ENCODE measurements at regions of chr9 and their contacts with region 1.

Region 1: GRCh38 chr9:87223392-87224246 is 274.0 kb upstream of the DAPK1 start:
- DNase-seq: no peak
- ATAC-seq: no peak
- H3K4me3 Mint-ChIP-seq: no peak overlapping the region
- H3K27ac Mint-ChIP-seq: no peak overlapping the region
- H3K4me1 Mint-ChIP-seq: no peaks in the 10 kb centered on the region
- H3K27me3 Mint-ChIP-seq: peaks cover 5% of the 10 kb centered on the region

Region 2: GRCh38 chr9:86794391-86795046 is 429.1 kb before region 1 on chr9:
- CTCF ChIA-PET with region 1: no interaction called
- POLR2A ChIA-PET with region 1: no interaction called
- intact Hi-C with region 1: no loop called
- DNase-seq: no peak
- ATAC-seq: no peak
- H3K4me3 Mint-ChIP-seq: no peak overlapping the region
- H3K27ac Mint-ChIP-seq: no peak overlapping the region
- H3K4me1 Mint-ChIP-seq: no peaks in the 10 kb centered on the region
- H3K27me3 Mint-ChIP-seq: peaks cover 2% of the 10 kb centered on the region

Region 3: GRCh38 chr9:87160148-87161102 is 63.2 kb before region 1 on chr9:
- CTCF ChIA-PET with region 1: no interaction called
- POLR2A ChIA-PET with region 1: no interaction called
- intact Hi-C with region 1: loop called in 1 of 2 experiments (anchors 10 kb)
- DNase-seq: no peak
- ATAC-seq: no peak
- H3K4me3 Mint-ChIP-seq: no peak overlapping the region
- H3K27ac Mint-ChIP-seq: no peak overlapping the region
- H3K4me1 Mint-ChIP-seq: no peaks in the 10 kb centered on the region
- H3K27me3 Mint-ChIP-seq: peaks cover 12% of the 10 kb centered on the region

Measured in activated CD4-positive, alpha-beta T cell treated with anti-CD3 and anti-CD28 coated beads for 36 hours (primary cell).